ENCODE measurements at regions of chr13 and their contacts with region 1.

Region 1: DNA sequence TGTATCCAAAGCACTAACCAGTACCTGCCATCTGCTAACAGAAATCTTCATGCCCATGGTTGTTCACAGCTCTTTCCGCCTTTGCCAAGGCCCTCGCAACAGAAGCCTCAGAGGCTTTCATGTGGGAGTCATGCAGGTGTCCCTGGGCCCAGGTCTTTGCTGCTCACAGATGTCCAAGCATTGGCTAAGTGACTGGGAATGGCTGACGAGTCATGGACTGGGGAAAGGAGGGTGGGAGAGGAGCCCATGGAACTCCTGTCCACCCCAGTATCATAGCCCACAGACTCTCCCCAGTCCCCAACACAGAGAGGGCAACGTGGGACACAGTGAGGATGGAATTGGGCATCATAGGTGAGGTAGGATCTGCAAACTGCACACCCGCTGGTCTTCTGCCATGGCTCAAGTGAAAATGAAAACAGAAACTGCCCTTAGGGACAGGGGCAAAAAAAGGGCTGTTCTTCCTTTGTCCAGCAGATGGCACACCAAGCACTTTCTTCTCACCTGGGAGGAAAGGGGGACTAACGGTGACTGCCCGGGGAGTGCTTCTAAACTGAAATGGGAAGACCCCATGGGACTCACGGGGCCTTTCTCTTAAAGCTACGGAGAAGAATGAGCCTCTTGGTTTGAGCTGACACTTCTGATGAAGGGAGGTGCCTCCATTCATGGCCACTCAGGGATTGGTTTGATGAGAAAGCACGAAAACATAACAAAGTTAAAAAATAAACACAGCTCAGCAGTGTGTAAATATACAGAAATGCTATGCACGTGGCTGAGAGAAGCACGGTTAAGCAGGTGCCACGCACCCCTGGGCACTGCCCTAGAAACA is 11.1 kb upstream of the DHRS12 start:
- DNase-seq: peak; percentile 94
- H3K4me3 Mint-ChIP-seq: peak overlapping the region; percentile 33
- H3K27ac Mint-ChIP-seq: peak overlapping the region; percentile 5
- H3K4me1 Mint-ChIP-seq: peaks cover 45% of the 10 kb centered on the region
- H3K27me3 Mint-ChIP-seq: peaks cover 5% of the 10 kb centered on the region

Region 2: DNA sequence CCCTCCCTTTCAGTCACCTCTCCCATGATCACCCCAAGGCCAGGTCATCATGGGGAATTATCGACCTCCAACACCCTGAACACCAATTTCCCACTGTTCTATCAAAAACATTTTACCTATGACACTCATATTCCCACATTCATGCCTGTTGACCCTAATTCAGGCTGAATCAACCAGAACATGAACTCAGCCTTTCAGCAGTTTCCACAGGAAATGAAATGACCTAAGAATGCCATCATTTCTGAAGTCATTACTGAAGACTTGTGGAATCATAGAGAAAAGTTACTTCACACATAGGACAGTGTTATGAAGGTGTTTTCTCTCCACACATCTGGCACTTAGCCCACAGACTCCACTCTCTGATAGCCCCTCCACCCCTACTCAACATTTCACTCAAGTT is 622.7 kb before region 1 on chr13:
- intact Hi-C with region 1: no loop called
- DNase-seq: no peak
- H3K4me3 Mint-ChIP-seq: no peak overlapping the region
- H3K27ac Mint-ChIP-seq: peak overlapping the region; percentile 10
- H3K4me1 Mint-ChIP-seq: peaks cover 5% of the 10 kb centered on the region
- H3K27me3 Mint-ChIP-seq: peaks cover 3% of the 10 kb centered on the region

Region 3: GRCh38 chr13:51832471-51833152 is 17.6 kb after region 1 on chr13:
- intact Hi-C with region 1: loop called (anchors 1 kb)
- DNase-seq: peak; percentile 85
- H3K4me3 Mint-ChIP-seq: no peak overlapping the region
- H3K27ac Mint-ChIP-seq: no peak overlapping the region
- H3K4me1 Mint-ChIP-seq: peaks cover 21% of the 10 kb centered on the region
- H3K27me3 Mint-ChIP-seq: peaks cover 8% of the 10 kb centered on the region

Region 4: GRCh38 chr13:51849145-51850101 is 34.4 kb after region 1 on chr13:
- intact Hi-C with region 1: loop called (anchors 2 kb)
- DNase-seq: peak; percentile 78
- H3K4me3 Mint-ChIP-seq: no peak overlapping the region
- H3K27ac Mint-ChIP-seq: no peak overlapping the region
- H3K4me1 Mint-ChIP-seq: peaks cover 18% of the 10 kb centered on the region
- H3K27me3 Mint-ChIP-seq: peaks cover 16% of the 10 kb centered on the region

Region 5: DNA sequence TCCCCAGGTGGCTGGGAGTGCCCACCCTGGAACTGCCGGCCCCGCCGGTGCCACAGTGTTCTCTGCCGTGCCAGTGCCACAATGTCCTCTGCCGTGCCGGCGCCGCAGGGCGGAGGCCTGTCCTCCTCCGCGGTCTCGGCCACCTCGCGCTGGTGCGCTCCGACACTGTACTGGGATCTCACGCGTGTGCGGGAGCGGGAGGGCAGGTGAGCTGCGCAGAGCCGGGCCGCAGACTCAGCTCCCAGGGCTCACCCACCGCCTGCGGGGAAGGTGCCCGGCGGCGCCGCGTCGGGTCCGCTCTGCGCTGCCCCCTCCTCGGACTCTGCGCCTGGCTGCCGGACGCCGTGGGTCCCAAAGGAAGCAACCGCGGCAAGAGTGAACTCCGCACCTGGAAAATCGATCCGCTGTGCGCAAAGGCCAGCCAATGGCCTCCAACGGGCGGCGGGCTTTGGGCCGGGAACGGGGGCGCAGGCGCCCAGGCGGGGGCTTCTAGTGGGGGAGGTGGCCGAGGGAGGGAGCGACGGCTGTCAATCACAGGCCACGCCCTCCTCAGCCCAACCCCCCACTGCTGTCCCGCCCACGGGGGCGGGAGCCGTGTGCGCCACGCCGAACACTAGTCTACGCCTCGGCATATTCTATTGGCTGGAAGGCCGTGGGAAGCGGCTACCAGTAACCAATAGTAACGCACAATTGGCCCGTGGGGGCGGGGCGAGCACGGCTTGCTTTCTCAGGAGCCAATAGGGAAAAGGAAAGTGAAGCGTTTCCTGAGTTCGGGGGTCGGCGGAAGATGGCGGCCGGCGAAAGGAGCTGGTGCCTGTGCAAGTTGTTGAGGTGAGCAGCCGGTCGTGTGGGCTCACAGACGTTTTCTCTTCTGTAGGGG is 196.8 kb after region 1 on chr13 and contains the start of gene ALG11:
- intact Hi-C with region 1: loop called (anchors 5 kb)
- DNase-seq: peak; percentile 100
- H3K4me3 Mint-ChIP-seq: peak within 1 kb of the TSS; percentile 99
- H3K27ac Mint-ChIP-seq: peak within 1 kb of the TSS; percentile 93
- H3K4me1 Mint-ChIP-seq: peaks cover 8% of the 10 kb centered on the region
- H3K27me3 Mint-ChIP-seq: peaks cover 34% of the 10 kb centered on the region
- total RNA-seq, gene ALG11: 26.7 and 28.0 TPM in 2 replicates

Measured in activated CD4-positive, alpha-beta T cell treated with anti-CD3 and anti-CD28 coated beads, Interleukin-2, amount 10 ng/mL, durations not matched to agents 24 days and 14 days (primary cell).